IMR-90 (cell line): ENCODE measurements at regions of chr18 and their contacts with region 1.

Region 1: GRCh38 chr18:22300665-22301636 is 116.8 kb downstream of the CTAGE1 start:
- DNase-seq: no peak
- ATAC-seq: no peak
- H3K4me3 ChIP-seq: no peak overlapping the region
- H3K27ac ChIP-seq: no peak overlapping the region
- H3K4me1 ChIP-seq: no peaks in the 10 kb centered on the region
- H3K27me3 ChIP-seq: peaks cover 12% of the 10 kb centered on the region
- CTCF ChIP-seq: no peak
- POLR2A ChIP-seq: no peak
- RAD21 ChIP-seq: no peak

Region 2: GRCh38 chr18:22210311-22210754 is 90.6 kb before region 1 on chr18:
- CTCF ChIA-PET with region 1: no interaction called
- POLR2A ChIA-PET with region 1: no interaction called
- dilution Hi-C with region 1: no loop called
- in situ Hi-C with region 1: no loop called
- intact Hi-C with region 1: no loop called
- DNase-seq: peak; percentile 65
- ATAC-seq: peak; percentile 48
- H3K4me3 ChIP-seq: no peak overlapping the region
- H3K27ac ChIP-seq: no peak overlapping the region
- H3K4me1 ChIP-seq: peaks cover 3% of the 10 kb centered on the region
- H3K27me3 ChIP-seq: no peaks in the 10 kb centered on the region
- CTCF ChIP-seq: no peak
- POLR2A ChIP-seq: no peak
- RAD21 ChIP-seq: no peak

Region 3: GRCh38 chr18:22223254-22223960 is 77.5 kb before region 1 on chr18:
- CTCF ChIA-PET with region 1: no interaction called
- POLR2A ChIA-PET with region 1: no interaction called
- dilution Hi-C with region 1: no loop called
- in situ Hi-C with region 1: no loop called
- intact Hi-C with region 1: loop called (anchors 10 kb)
- DNase-seq: peak; percentile 95
- ATAC-seq: peak; percentile 94
- H3K4me3 ChIP-seq: no peak overlapping the region
- H3K27ac ChIP-seq: no peak overlapping the region
- H3K4me1 ChIP-seq: peaks cover 1% of the 10 kb centered on the region; the same call in 1 of the 2 replicates
- H3K27me3 ChIP-seq: peaks cover 2% of the 10 kb centered on the region; the same call in 1 of the 2 replicates
- CTCF ChIP-seq: no peak
- POLR2A ChIP-seq: no peak
- RAD21 ChIP-seq: 0 out of 2 replicates have a peak, but pooled peaks have one; percentile 18